Calu3 (cell line): ENCODE measurements at regions of chr9 and their contacts with region 1.

Region 1: DNA sequence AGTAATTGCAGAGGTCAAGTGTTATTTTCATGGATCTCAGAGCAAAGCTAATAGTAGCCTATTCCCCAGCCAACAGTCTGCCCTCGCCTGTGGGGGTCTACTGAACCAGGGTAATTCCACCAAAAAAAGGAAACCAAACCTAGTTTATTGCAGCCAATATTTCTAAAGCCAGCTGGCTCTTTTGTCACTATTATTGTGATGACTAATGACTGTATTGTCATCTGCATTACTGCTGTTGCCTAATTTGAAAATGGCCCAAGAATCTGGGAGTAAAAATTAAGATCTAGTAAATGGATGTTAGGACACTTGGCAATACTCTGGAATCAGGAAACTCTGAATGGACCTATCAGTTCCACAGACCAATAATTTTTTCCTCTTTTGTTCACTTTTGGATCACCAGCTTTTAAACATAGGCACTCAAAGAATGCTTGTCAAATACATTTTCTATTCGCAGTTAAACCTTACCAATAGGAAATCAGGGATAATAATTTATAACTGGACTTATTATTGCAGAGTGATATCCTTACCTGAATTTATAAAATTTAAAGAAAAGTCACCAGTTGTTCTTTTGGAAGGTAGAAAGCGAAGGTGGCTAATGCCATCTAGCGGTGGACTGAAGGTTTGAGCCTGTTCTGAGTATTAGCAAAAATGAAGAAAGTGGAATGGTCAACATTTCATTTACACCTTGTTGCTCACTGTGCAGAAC is 69.2 kb downstream of the SYK start:
- DNase-seq: peak; percentile 14
- H3K4me3 Mint-ChIP-seq: no peak overlapping the region
- H3K27ac Mint-ChIP-seq: no peak overlapping the region
- H3K4me1 Mint-ChIP-seq: no peaks in the 10 kb centered on the region
- H3K27me3 Mint-ChIP-seq: no peaks in the 10 kb centered on the region
- CTCF ChIP-seq: no peak

Region 2: GRCh38 chr9:90142580-90142979 is 728.2 kb before region 1 on chr9:
- CTCF ChIA-PET with region 1: no interaction called
- intact Hi-C with region 1: loop called (anchors 2 kb)
- DNase-seq: peak; percentile 44
- H3K4me3 Mint-ChIP-seq: no peak overlapping the region
- H3K27ac Mint-ChIP-seq: no peak overlapping the region
- H3K4me1 Mint-ChIP-seq: no peaks in the 10 kb centered on the region
- H3K27me3 Mint-ChIP-seq: no peaks in the 10 kb centered on the region
- CTCF ChIP-seq: no peak

Region 3: DNA sequence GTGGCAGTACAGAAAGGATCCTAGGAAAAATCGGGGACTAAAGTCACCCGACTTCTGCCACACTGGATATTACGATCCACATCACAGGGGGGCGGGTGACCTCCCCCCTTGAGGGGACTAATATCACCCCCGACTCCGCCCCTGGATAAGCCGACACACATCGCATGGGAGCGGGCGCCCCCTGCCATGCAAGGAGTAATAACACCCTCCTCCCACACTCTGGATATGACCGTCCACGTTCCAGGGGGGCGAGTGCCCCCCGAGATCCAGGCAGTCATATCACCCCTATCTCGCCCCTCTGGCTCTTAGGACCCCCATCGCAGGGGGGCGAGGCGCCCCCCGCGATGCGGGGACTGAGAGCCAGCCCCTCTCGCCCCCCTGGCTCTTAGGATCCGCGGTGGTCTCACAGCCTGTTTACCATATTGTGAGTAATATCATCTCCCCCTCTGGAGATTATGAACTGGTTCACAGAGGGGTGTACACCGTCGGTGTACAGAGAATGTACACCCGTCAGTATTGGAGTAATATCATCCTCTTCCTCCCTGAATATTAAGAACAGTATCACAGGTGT is 651.1 kb before region 1 on chr9:
- CTCF ChIA-PET with region 1: no interaction called
- intact Hi-C with region 1: loop called (anchors 10 kb)
- DNase-seq: peak; percentile 63
- H3K4me3 Mint-ChIP-seq: peak overlapping the region; percentile 58
- H3K27ac Mint-ChIP-seq: no peak overlapping the region
- H3K4me1 Mint-ChIP-seq: peaks cover 7% of the 10 kb centered on the region
- H3K27me3 Mint-ChIP-seq: no peaks in the 10 kb centered on the region
- CTCF ChIP-seq: peak; percentile 74

Region 4: GRCh38 chr9:90611568-90611967 is 259.2 kb before region 1 on chr9:
- CTCF ChIA-PET with region 1: no interaction called
- intact Hi-C with region 1: no loop called
- DNase-seq: no peak
- H3K4me3 Mint-ChIP-seq: no peak overlapping the region
- H3K27ac Mint-ChIP-seq: no peak overlapping the region
- H3K4me1 Mint-ChIP-seq: peaks cover 30% of the 10 kb centered on the region
- H3K27me3 Mint-ChIP-seq: no peaks in the 10 kb centered on the region
- CTCF ChIP-seq: no peak

Region 5: GRCh38 chr9:90642570-90643539 is 227.9 kb before region 1 on chr9 and contains the start of gene DIRAS2:
- CTCF ChIA-PET with region 1: no interaction called
- intact Hi-C with region 1: loop called (anchors 5 kb)
- DNase-seq: peak; percentile 78
- H3K4me3 Mint-ChIP-seq: peak within 1 kb of the TSS; percentile 84
- H3K27ac Mint-ChIP-seq: peak within 1 kb of the TSS; percentile 44
- H3K4me1 Mint-ChIP-seq: peaks cover 10% of the 10 kb centered on the region
- H3K27me3 Mint-ChIP-seq: peaks cover 5% of the 10 kb centered on the region
- CTCF ChIP-seq: peak; percentile 43
- total RNA-seq, gene DIRAS2: 1.5 and 1.7 TPM in 2 replicates

Region 6: GRCh38 chr9:90773617-90774016 is 97.2 kb before region 1 on chr9:
- CTCF ChIA-PET with region 1: no interaction called
- intact Hi-C with region 1: loop called (anchors 5 kb)
- DNase-seq: peak; percentile 26
- H3K4me3 Mint-ChIP-seq: no peak overlapping the region
- H3K27ac Mint-ChIP-seq: no peak overlapping the region
- H3K4me1 Mint-ChIP-seq: no peaks in the 10 kb centered on the region
- H3K27me3 Mint-ChIP-seq: no peaks in the 10 kb centered on the region
- CTCF ChIP-seq: peak; percentile 41